CD4-positive, alpha-beta memory T cell (primary cell): ENCODE measurements at regions of chr19 and their contacts with region 1.

Region 1: DNA sequence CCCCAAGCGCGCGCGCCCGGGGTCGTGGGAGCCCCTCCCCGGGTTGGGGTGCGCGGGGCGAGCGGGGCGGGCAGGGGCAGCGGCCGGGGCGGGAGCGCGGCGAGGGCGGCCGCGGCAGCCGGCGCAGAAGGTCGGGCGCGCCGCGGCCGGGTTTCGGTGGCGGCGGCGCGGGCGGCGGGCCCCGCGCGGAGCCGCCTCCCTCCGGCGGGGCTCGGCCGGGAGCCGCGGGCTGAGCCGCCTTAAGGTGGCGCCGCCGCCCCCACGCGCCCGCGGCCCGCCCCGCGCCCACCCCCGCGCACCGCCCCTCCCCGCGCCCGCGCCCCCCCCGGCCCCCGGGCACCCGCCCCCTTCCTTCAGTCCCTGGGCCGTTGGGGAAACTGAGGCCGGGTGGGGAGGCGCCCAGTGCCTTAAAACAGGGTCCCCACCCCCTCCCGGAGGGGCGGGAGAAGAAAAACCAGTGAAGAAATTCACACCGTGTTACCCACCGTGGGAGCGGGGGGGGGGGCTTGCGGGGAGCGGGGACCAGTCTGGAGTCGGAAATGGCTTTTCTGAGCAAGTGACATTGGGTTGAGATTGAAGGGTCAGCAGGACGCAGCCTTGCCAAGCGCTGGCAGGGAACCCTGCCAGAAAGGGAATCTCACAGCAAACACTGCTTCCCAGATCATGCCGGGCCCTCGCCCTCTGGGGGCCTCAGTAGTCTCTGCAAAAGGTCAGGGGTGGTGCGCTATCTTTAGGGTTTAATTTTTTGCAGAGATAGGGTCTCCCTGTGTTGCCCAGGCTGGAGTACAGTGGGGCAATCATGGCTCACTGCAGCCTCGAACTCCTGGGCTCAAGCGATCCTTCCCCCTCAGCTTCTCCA is at the start of gene TLE2:
- DNase-seq: peak in 2 of 5 donors; percentile 20 to 35
- H3K4me3 ChIP-seq: peak within 1 kb of the TSS in 1 of 2 donors; percentile 41
- H3K4me3 Mint-ChIP-seq: peak within 1 kb of the TSS; percentile 72 to 85 (median 80)
- H3K27ac ChIP-seq: no peak within 1 kb of the TSS
- H3K27ac Mint-ChIP-seq: peak within 1 kb of the TSS in 6 of 7 donors; percentile 30 to 85 (median 36)
- H3K4me1 ChIP-seq: peaks cover 24% of the 10 kb centered on the region
- H3K4me1 Mint-ChIP-seq: peaks cover 9 to 38% (median 25%) of the 10 kb centered on the region in 4 donors
- H3K27me3 ChIP-seq: no peaks in the 10 kb centered on the region
- H3K27me3 Mint-ChIP-seq: no peaks in the 10 kb centered on the region
- total RNA-seq, gene TLE2: 20.9 to 23.1 TPM

Region 2: DNA sequence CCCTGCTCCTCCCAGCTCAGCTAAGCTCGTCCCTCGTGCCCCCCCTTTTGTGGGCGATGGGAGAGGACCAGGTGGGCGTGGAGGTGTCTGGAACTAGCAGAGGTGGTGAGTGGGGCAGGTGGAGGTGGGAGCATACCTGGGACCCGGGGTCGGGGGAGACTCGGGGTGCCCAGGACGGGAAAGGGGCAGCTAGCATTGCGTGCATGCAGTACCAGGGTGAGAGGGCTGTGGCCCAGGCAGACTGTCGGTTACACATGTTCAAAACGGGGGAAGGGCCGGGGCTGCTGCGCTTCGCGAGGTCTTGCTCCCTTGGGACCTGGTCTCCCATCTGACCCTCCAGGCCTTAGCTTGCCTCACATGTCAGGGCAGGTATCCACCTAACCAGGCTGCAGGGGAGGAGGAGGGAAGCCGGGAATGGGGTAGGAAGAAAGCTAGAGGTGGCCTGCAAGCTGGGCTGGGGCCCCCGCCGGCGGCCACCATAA is 24.0 kb after region 1 on chr19:
- CTCF ChIA-PET with region 1: no interaction called
- POLR2A ChIA-PET with region 1: interaction called, 555 read pairs
- intact Hi-C with region 1: no loop called
- DNase-seq: no peak
- H3K4me3 ChIP-seq: no peak overlapping the region
- H3K4me3 Mint-ChIP-seq: no peak overlapping the region
- H3K27ac ChIP-seq: no peak overlapping the region
- H3K27ac Mint-ChIP-seq: peak overlapping the region in 1 of 7 donors; percentile 78
- H3K4me1 ChIP-seq: peaks cover 39% of the 10 kb centered on the region
- H3K4me1 Mint-ChIP-seq: peaks cover 17 to 34% (median 24%) of the 10 kb centered on the region in 4 donors
- H3K27me3 ChIP-seq: no peaks in the 10 kb centered on the region
- H3K27me3 Mint-ChIP-seq: no peaks in the 10 kb centered on the region